GM18951 (cell line): ENCODE measurements at regions of chr12 and their contacts with region 1.

Region 1: GRCh38 chr12:98653866-98654493 is 8.9 kb downstream of the APAF1 start:
- POLR2A ChIP-seq: no peak

Region 2: GRCh38 chr12:98224584-98225221 is 429.3 kb before region 1 on chr12:
- in situ Hi-C with region 1: no loop called
- POLR2A ChIP-seq: no peak

Region 3: DNA sequence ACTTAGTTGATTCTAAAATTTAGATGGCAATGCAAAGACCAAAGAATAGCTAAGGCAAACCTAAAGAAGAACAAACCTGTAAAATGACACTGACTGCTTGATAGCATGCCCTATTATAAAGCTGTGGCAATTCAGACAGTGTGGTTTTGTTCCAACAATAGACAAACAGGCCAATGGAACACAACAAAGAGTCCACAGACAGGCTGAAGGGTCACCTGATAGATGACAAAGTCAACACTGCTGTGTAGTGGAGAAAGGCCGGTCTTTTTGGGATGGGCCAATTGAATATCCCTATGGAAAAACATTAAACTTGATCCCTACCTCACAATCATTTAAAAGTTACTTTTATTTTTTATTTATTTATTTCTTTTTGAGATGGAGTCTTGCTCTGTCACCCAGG is 94.3 kb before region 1 on chr12:
- in situ Hi-C with region 1: loop called (anchors 10 kb)
- POLR2A ChIP-seq: no peak

Region 4: DNA sequence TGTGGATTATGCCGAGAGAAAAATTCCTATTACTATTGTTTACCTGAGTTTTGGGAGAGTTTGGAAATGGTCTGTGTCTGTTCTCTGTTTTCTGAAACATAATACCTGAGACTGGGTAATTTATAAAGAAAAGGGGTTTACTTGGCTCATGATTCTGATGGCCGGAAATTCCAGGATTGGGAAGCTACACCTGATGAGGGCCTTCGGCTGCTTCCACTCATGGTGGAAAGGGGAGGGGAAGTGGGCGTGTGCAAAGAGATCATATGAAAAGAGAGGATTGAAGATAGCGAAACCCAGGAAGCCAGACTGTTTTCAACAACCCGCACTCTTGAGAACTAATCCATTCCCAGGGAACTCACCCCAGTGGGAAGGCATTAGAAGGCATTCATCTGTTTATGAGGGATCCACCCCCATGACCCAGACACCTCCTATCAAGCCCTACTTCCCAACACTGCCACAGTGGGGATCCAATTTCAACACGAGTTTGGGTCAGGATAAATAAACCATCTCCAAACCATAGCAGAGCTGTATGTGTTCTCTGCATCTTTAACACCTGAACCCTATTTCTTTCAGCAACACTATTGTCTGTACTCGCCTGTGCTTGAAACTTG is 42.2 kb after region 1 on chr12:
- in situ Hi-C with region 1: no loop called
- POLR2A ChIP-seq: no peak